HAP-1 (cell line): ENCODE measurements at regions of chr15 and their contacts with region 1.

Region 1: GRCh38 chr15:85831415-85832113 is 36.8 kb upstream of the KLHL25 start:
- DNase-seq: peak; percentile 56 to 87
- H3K4me3 ChIP-seq: no peak overlapping the region
- H3K4me1 ChIP-seq: peaks cover 3% of the 10 kb centered on the region; the same call in 1 of the 2 replicates
- H3K27me3 ChIP-seq: no peaks in the 10 kb centered on the region; the same call in 1 of the 2 replicates

Region 2: DNA sequence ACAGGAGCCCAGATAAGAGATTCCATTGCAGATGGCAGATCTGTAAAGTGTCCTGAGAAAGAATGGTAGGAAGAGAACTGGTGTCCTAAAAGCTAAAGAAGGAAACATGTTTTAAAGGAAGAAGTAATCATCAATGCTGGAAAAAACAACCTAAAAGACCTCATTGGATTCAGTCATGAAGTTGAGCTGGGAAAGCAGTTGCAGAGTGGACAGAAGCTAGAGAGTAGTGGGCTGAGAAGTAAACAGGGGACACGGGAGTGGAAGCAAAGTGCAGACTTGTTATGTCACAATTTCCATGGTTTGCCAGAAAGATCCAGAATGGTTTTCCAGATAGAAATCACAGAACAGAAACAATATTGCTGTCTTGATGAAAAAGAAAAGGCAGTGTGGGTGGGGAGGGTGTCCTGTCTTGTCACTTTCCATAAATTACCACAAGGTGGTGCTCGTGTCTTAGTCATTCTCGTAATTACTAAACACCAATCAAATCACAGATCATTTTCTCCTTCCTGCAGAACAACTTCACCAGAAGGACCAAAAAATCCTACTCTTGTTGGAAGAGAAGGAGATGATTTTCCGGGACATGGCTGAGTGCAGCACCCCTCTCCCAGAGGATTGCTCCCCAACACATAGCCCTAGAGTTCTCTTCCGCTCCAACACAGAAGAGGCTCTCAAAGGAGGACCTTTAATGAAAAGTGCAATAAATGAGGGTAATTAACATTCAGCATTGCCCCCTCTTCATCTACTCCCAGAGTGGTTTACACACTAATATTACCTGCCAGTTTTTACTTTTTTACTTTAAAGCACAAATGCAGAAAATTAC is 101.4 kb before region 1 on chr15:
- in situ Hi-C with region 1: loop called (anchors 5 kb)
- DNase-seq: peak; percentile 79 to 91
- H3K4me3 ChIP-seq: no peak overlapping the region
- H3K4me1 ChIP-seq: no peaks in the 10 kb centered on the region
- H3K27me3 ChIP-seq: no peaks in the 10 kb centered on the region